K562 (cell line): ENCODE measurements at regions of chr19 and their contacts with region 1.

Region 1: DNA sequence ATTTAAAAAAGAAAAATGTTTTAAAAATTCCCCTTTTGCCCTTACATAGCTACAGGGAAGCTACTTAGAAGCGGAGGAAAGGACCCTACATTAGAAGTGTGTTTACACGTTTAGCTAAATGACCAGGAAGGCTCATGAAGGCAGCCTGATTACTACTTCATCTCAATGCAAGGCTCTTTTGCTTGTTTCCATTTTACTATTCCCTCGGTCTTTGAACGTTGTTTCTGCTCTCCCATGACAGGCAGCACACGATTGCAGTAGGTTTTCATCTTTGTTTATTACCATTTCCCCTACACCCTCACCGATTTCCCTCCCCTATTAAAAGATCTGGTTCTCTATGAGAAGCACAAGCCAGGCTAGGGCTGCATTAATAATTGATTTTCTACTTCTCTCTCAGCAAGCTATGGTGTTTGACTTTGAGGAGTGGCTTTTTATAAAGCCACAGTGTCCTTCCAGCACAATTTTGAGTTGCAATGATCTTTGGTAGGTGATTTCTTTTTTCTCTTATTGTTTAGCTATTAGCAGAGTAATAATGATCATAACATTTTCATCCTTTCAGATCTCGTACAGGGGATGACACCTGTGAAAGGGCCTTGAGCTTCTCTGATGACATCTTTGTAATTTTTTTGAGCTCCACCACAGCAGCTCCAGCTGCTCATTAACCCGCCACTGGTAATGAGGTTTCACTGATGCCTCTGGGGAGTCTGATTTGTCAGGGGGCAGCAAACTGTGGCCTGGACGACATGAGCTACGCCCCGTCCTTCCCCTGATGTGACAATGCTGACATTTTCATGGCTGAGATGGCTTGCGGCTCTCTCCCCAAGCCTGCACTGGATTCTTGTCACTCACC is 670.3 kb downstream of the UQCRFS1 start:
- DNase-seq: peak in 1 of 4 experiments; percentile 68
- ATAC-seq: peak; percentile 14
- H3K4me3 ChIP-seq: peak overlapping the region; percentile 48
- H3K27ac ChIP-seq: peak overlapping the region; percentile 85
- H3K4me1 ChIP-seq: peaks cover 18 to 19% of the 10 kb centered on the region in 2 experiments
- H3K27me3 ChIP-seq: no peaks in the 10 kb centered on the region
- CTCF ChIP-seq: no peak
- EP300 ChIP-seq: no peak
- POLR2A ChIP-seq: no peak
- RAD21 ChIP-seq: no peak

Region 2: DNA sequence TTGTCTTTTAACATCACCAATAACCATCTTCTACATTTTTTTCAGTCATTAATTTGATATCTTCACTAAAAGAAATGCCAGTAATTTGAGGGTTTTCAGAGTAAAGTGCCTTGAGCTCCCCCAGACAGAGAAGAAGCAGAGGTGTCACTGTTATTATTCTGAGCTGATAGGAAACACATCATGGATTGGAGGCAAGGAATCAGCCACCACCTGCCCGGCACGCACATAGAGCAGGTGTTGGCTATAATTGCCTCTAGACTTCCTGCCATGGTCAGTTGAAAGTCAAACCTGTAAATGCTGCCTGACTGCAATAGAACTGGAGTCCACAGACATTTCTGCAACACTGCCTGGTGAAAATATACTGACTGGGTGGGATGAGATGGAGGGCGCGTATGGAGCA is 106.3 kb before region 1 on chr19:
- CTCF ChIA-PET with region 1: no interaction called
- POLR2A ChIA-PET with region 1: no interaction called
- in situ Hi-C with region 1: no loop called
- intact Hi-C with region 1: no loop called
- DNase-seq: no peak
- ATAC-seq: no peak
- H3K4me3 ChIP-seq: no peak overlapping the region
- H3K27ac ChIP-seq: no peak overlapping the region
- H3K4me1 ChIP-seq: peaks cover 0 to 2% of the 10 kb centered on the region in 2 experiments; a peak in 1 of 5 replicates
- H3K27me3 ChIP-seq: no peaks in the 10 kb centered on the region
- CTCF ChIP-seq: no peak
- EP300 ChIP-seq: no peak
- POLR2A ChIP-seq: no peak
- RAD21 ChIP-seq: no peak

Region 3: GRCh38 chr19:28523619-28524018 is 19.0 kb before region 1 on chr19:
- CTCF ChIA-PET with region 1: no interaction called
- POLR2A ChIA-PET with region 1: interaction called, 27 read pairs
- in situ Hi-C with region 1: no loop called
- intact Hi-C with region 1: loop called (anchors 2 kb)
- DNase-seq: no peak
- ATAC-seq: no peak
- H3K4me3 ChIP-seq: no peak overlapping the region; the same call in 1 of the 2 replicates
- H3K27ac ChIP-seq: peak overlapping the region; percentile 80; the same call in 1 of the 3 replicates
- H3K4me1 ChIP-seq: peaks cover 9 to 42% of the 10 kb centered on the region in 2 experiments
- H3K27me3 ChIP-seq: no peaks in the 10 kb centered on the region
- CTCF ChIP-seq: no peak
- EP300 ChIP-seq: no peak
- POLR2A ChIP-seq: no peak
- RAD21 ChIP-seq: no peak

Region 4: GRCh38 chr19:28530406-28531035 is 12.1 kb before region 1 on chr19:
- CTCF ChIA-PET with region 1: no interaction called
- POLR2A ChIA-PET with region 1: interaction called, 27 read pairs
- in situ Hi-C with region 1: no loop called
- intact Hi-C with region 1: loop called (anchors 2 kb)
- DNase-seq: peak in 1 of 4 experiments; percentile 53
- ATAC-seq: peak; percentile 19
- H3K4me3 ChIP-seq: peak overlapping the region; percentile 42
- H3K27ac ChIP-seq: peak overlapping the region; percentile 72
- H3K4me1 ChIP-seq: peaks cover 10 to 11% of the 10 kb centered on the region in 2 experiments; a peak in 4 of 5 replicates
- H3K27me3 ChIP-seq: no peaks in the 10 kb centered on the region
- CTCF ChIP-seq: peak in 2 of 3 experiments; percentile 39; a peak in 4 of 6 replicates
- EP300 ChIP-seq: no peak
- POLR2A ChIP-seq: no peak
- RAD21 ChIP-seq: peak; percentile 16 to 62; a peak in 2 of 4 replicates